ENCODE measurements at regions of chr1 and their contacts with region 1.

Region 1: GRCh38 chr1:154974063-154974807 is at the start of gene CKS1B:
- DNase-seq: peak; percentile 97 to 99
- H3K4me3 ChIP-seq: peak within 1 kb of the TSS; percentile 52
- H3K4me3 Mint-ChIP-seq: no peak within 1 kb of the TSS
- H3K27ac Mint-ChIP-seq: no peak within 1 kb of the TSS
- H3K4me1 ChIP-seq: peaks cover 27% of the 10 kb centered on the region
- H3K4me1 Mint-ChIP-seq: peaks cover 25% of the 10 kb centered on the region
- H3K27me3 ChIP-seq: no peaks in the 10 kb centered on the region
- H3K27me3 Mint-ChIP-seq: no peaks in the 10 kb centered on the region
- CTCF ChIP-seq: no peak
- total RNA-seq, gene CKS1B: 243 and 259 TPM in 2 replicates

Region 2: DNA sequence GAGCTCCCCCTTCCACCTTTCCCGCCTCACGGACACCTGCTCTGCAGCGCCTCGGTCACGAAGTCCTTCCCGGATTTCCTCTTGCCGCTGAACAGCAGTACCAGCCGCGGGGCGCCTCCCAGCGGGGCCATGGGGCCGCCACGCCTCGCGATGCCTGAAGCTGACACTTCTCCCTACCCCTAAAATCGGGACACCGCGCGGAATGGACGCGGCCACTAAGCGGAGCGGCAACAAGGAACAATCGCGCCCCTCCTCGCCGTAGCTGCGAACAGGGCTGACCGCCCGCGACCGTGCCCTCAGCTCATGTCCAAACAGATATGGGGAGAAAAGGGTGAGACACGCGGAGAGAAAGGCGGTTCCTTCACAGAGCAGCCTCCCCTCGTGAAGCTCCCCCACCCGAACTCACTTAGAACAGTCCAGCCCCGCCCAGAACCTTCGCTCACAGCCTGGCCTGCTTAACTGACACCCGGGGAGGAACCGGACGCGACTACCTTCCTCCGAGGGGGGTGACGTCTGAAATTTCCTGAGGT is 37.6 kb before region 1 on chr1 and contains the start of gene PMVK:
- CTCF ChIA-PET with region 1: interaction called, 6 read pairs
- POLR2A ChIA-PET with region 1: interaction called, 21 read pairs
- intact Hi-C with region 1: loop called (anchors 1 kb)
- DNase-seq: peak; percentile 97 to 98
- H3K4me3 ChIP-seq: peak within 1 kb of the TSS; percentile 72
- H3K4me3 Mint-ChIP-seq: peak within 1 kb of the TSS; percentile 87
- H3K27ac Mint-ChIP-seq: peak within 1 kb of the TSS; percentile 99
- H3K4me1 ChIP-seq: peaks cover 6% of the 10 kb centered on the region
- H3K4me1 Mint-ChIP-seq: peaks cover 17% of the 10 kb centered on the region
- H3K27me3 ChIP-seq: no peaks in the 10 kb centered on the region
- H3K27me3 Mint-ChIP-seq: no peaks in the 10 kb centered on the region
- CTCF ChIP-seq: peak in 1 of 2 experiments; percentile 62
- total RNA-seq, gene PMVK: 25.1 and 25.2 TPM in 2 replicates

Region 3: DNA sequence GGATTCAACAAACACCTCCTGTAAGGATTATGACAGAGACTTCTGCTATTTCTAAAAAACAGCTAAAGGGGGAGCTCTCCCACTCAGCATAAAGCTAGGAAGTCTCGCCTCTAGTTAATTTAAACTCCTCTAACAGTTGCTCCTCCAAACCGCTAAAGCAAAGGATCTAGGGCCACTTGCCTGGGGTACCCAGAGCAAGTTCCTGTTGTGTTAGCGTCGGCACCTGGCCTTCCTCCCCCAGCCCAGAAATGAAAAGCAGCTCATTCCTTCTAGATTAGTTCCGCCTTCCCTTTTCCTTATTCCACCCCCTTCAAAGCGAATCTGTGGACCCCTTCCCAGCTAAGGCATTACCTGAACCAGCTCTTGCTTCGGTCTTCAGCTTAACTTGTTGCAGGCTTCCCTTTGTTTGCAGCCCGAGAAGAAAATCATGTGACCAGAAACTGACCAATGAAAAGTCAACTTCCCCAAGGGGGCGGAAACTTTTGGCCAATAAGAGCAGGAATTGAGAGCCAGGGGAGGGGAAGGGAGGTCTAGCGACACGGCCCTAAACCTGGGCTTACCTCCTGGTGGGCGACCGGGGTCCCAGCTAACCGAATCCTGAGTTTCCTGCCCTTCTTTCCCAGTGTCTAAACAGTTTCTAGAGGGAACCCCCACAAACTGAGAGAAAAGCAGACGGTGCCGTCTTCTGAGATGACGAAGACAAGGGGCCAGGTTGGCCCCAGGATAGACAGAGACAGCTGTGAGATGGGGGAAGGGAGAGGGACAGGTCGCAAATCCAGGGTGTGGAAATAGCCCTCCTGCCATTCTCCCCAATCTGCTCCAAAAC is 18.3 kb before region 1 on chr1 and contains the start of gene PBXIP1:
- CTCF ChIA-PET with region 1: interaction called, 15 read pairs
- POLR2A ChIA-PET with region 1: interaction called, 34 read pairs
- intact Hi-C with region 1: loop called (anchors 1 kb)
- DNase-seq: peak; percentile 87 to 92
- H3K4me3 ChIP-seq: peak within 1 kb of the TSS; percentile 43
- H3K4me3 Mint-ChIP-seq: peak within 1 kb of the TSS; percentile 80
- H3K27ac Mint-ChIP-seq: peak within 1 kb of the TSS; percentile 79
- H3K4me1 ChIP-seq: peaks cover 15% of the 10 kb centered on the region
- H3K4me1 Mint-ChIP-seq: peaks cover 16% of the 10 kb centered on the region
- H3K27me3 ChIP-seq: no peaks in the 10 kb centered on the region
- H3K27me3 Mint-ChIP-seq: no peaks in the 10 kb centered on the region
- CTCF ChIP-seq: peak in 1 of 2 experiments; percentile 29
- total RNA-seq, gene PBXIP1: 24.0 and 24.6 TPM in 2 replicates

Region 4: GRCh38 chr1:154961497-154962262 is 12.6 kb before region 1 on chr1 and contains the start of gene PYGO2:
- CTCF ChIA-PET with region 1: interaction called, 15 read pairs
- POLR2A ChIA-PET with region 1: interaction called, 34 read pairs
- intact Hi-C with region 1: loop called (anchors 1 kb)
- DNase-seq: peak; percentile 80 to 90
- H3K4me3 ChIP-seq: peak within 1 kb of the TSS; percentile 95
- H3K4me3 Mint-ChIP-seq: peak within 1 kb of the TSS; percentile 88
- H3K27ac Mint-ChIP-seq: peak within 1 kb of the TSS; percentile 81
- H3K4me1 ChIP-seq: peaks cover 12% of the 10 kb centered on the region
- H3K4me1 Mint-ChIP-seq: peaks cover 16% of the 10 kb centered on the region
- H3K27me3 ChIP-seq: no peaks in the 10 kb centered on the region
- H3K27me3 Mint-ChIP-seq: no peaks in the 10 kb centered on the region
- CTCF ChIP-seq: peak; percentile 23 to 55
- total RNA-seq, gene PYGO2: 34.1 and 34.9 TPM in 2 replicates

Region 5: GRCh38 chr1:154992721-154993571 is 18.7 kb after region 1 on chr1:
- CTCF ChIA-PET with region 1: interaction called, 9 read pairs
- POLR2A ChIA-PET with region 1: interaction called, 14 read pairs
- intact Hi-C with region 1: no loop called
- DNase-seq: peak in 1 of 2 experiments; percentile 30
- H3K4me3 ChIP-seq: no peak overlapping the region
- H3K4me3 Mint-ChIP-seq: no peak overlapping the region
- H3K27ac Mint-ChIP-seq: no peak overlapping the region
- H3K4me1 ChIP-seq: 0 out of 2 replicates have a peak, but pooled peaks cover 7% of the 10 kb centered on the region
- H3K4me1 Mint-ChIP-seq: peaks cover 15% of the 10 kb centered on the region
- H3K27me3 ChIP-seq: no peaks in the 10 kb centered on the region
- H3K27me3 Mint-ChIP-seq: no peaks in the 10 kb centered on the region
- CTCF ChIP-seq: peak in 1 of 2 experiments; percentile 36

Region 6: DNA sequence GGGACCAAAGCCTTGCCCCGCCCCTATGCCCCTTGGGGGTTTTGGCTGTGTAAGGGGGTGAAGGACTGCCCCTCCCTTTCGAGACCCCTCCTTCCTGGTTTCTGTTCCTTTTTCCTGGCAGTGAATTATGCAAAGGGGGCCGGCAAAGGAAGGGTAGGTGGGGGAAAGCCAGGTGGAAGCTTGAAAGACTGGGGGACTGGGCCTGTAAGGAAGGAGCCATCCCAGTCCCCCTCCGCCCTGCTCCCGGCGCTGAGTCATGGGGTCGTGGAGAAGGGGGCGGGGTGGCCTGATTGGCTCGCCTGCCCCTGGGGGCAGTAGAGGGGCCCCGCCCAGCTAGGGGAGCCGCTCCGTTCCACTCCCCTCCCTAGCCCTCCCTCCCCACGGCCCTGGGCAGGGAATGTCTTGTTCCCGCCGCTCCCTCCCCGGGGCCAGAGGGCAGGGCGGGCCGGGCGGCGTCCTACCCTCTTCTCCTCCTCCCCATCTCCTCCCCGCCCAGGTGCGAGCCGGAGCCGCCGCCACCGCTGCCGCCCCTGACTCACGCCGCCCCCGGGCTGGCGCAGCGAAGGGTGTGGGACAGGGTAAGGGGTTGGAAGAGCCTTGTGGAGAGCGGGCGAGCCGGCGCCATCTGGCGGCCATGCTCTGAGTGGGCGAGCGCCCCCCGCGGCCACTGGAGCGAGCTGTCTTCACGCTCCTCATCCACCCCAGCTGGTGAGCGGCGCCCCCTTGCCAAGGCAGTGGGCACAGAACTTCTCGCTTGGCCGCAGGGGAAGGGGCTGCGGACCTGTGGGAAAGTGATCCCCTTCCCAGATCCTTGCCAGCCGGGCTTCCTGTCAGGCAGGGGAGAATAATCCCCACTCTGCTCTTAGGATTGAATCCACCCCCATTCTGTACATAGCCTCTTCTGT is 43.1 kb after region 1 on chr1:
- CTCF ChIA-PET with region 1: interaction called, 12 read pairs
- POLR2A ChIA-PET with region 1: interaction called, 4 read pairs
- intact Hi-C with region 1: loop called (anchors 1 kb)
- DNase-seq: peak; percentile 97 to 98
- H3K4me3 ChIP-seq: peak overlapping the region; percentile 6; the same call in 1 of the 2 replicates
- H3K4me3 Mint-ChIP-seq: peak overlapping the region; percentile 56
- H3K27ac Mint-ChIP-seq: peak overlapping the region; percentile 76
- H3K4me1 ChIP-seq: peaks cover 20% of the 10 kb centered on the region
- H3K4me1 Mint-ChIP-seq: peaks cover 38% of the 10 kb centered on the region
- H3K27me3 ChIP-seq: no peaks in the 10 kb centered on the region
- H3K27me3 Mint-ChIP-seq: no peaks in the 10 kb centered on the region
- CTCF ChIP-seq: peak; percentile 99 to 100

Region 7: DNA sequence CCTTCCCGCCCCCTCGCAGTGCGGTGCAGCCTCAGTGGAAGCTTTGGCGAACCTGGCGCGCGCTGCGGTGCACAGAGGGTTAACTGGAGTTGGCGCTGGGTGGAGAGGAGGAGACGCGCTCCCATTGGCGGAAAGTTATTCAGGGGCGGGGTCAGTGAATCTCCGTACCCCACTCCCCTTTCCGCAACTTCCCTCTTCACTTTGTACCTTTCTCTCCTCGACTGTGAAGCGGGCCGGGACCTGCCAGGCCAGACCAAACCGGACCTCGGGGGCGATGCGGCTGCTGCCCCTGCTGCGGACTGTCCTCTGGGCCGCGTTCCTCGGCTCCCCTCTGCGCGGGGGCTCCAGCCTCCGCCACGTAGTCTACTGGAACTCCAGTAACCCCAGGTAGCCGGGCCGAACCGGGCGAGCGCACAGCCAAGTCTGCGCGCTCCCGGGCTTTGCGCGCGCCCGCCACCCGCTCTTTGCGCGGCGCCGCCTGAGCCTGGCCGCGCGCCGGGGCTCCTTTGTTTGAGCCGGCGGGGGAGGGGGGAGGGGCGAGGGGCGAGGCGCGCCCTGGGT is 89.4 kb after region 1 on chr1 and contains the start of gene EFNA4:
- CTCF ChIA-PET with region 1: interaction called, 4 read pairs
- POLR2A ChIA-PET with region 1: no interaction called
- intact Hi-C with region 1: loop called (anchors 5 kb)
- DNase-seq: peak; percentile 91
- H3K4me3 ChIP-seq: peak within 1 kb of the TSS; percentile 64
- H3K4me3 Mint-ChIP-seq: peak within 1 kb of the TSS; percentile 86
- H3K27ac Mint-ChIP-seq: peak within 1 kb of the TSS; percentile 22
- H3K4me1 ChIP-seq: 0 out of 2 replicates have a peak, but pooled peaks cover 19% of the 10 kb centered on the region
- H3K4me1 Mint-ChIP-seq: peaks cover 22% of the 10 kb centered on the region
- H3K27me3 ChIP-seq: no peaks in the 10 kb centered on the region
- H3K27me3 Mint-ChIP-seq: no peaks in the 10 kb centered on the region
- CTCF ChIP-seq: no peak
- total RNA-seq, gene EFNA4: 13.8 and 16.0 TPM in 2 replicates